Calu3 (cell line): ENCODE measurements at regions of chr17 and their contacts with region 1.

Region 1: GRCh38 chr17:74961657-74962490 is 10.7 kb downstream of the HID1 start:
- DNase-seq: peak; percentile 93
- H3K4me3 Mint-ChIP-seq: no peak overlapping the region
- H3K27ac Mint-ChIP-seq: no peak overlapping the region
- H3K4me1 Mint-ChIP-seq: peaks cover 20% of the 10 kb centered on the region
- H3K27me3 Mint-ChIP-seq: no peaks in the 10 kb centered on the region
- CTCF ChIP-seq: peak; percentile 87

Region 2: GRCh38 chr17:74923533-74924249 is 38.2 kb before region 1 on chr17:
- CTCF ChIA-PET with region 1: interaction called, 11 read pairs
- intact Hi-C with region 1: no loop called
- DNase-seq: peak; percentile 82
- H3K4me3 Mint-ChIP-seq: peak overlapping the region; percentile 61
- H3K27ac Mint-ChIP-seq: no peak overlapping the region
- H3K4me1 Mint-ChIP-seq: no peaks in the 10 kb centered on the region
- H3K27me3 Mint-ChIP-seq: peaks cover 83% of the 10 kb centered on the region
- CTCF ChIP-seq: peak; percentile 95

Region 3: GRCh38 chr17:74972107-74972972 is 10.5 kb after region 1 on chr17 and contains the start of gene HID1:
- CTCF ChIA-PET with region 1: interaction called, 26 read pairs
- intact Hi-C with region 1: no loop called
- DNase-seq: peak; percentile 86
- H3K4me3 Mint-ChIP-seq: peak within 1 kb of the TSS; percentile 72
- H3K27ac Mint-ChIP-seq: peak within 1 kb of the TSS; percentile 76
- H3K4me1 Mint-ChIP-seq: peaks cover 38% of the 10 kb centered on the region
- H3K27me3 Mint-ChIP-seq: no peaks in the 10 kb centered on the region
- CTCF ChIP-seq: no peak
- total RNA-seq, gene HID1: 114 and 122 TPM in 2 replicates

Region 4: GRCh38 chr17:74987418-74987908 is 25.6 kb after region 1 on chr17 and contains the start of gene CDR2L:
- CTCF ChIA-PET with region 1: interaction called, 10 read pairs
- intact Hi-C with region 1: no loop called
- DNase-seq: peak; percentile 98
- H3K4me3 Mint-ChIP-seq: peak within 1 kb of the TSS; percentile 93
- H3K27ac Mint-ChIP-seq: peak within 1 kb of the TSS; percentile 58
- H3K4me1 Mint-ChIP-seq: peaks cover 56% of the 10 kb centered on the region
- H3K27me3 Mint-ChIP-seq: no peaks in the 10 kb centered on the region
- CTCF ChIP-seq: no peak
- total RNA-seq, gene CDR2L: 39.4 and 48.3 TPM in 2 replicates

Region 5: GRCh38 chr17:75012346-75013091 is 50.6 kb after region 1 on chr17 and contains the start of gene MRPL58:
- CTCF ChIA-PET with region 1: interaction called, 38 read pairs
- intact Hi-C with region 1: loop called (anchors 5 kb)
- DNase-seq: peak; percentile 91
- H3K4me3 Mint-ChIP-seq: peak within 1 kb of the TSS; percentile 97
- H3K27ac Mint-ChIP-seq: peak within 1 kb of the TSS; percentile 74
- H3K4me1 Mint-ChIP-seq: peaks cover 40% of the 10 kb centered on the region
- H3K27me3 Mint-ChIP-seq: no peaks in the 10 kb centered on the region
- CTCF ChIP-seq: peak; percentile 64
- total RNA-seq, gene MRPL58: 49.0 and 52.7 TPM in 2 replicates

Region 6: GRCh38 chr17:75034236-75034908 is 72.5 kb after region 1 on chr17:
- CTCF ChIA-PET with region 1: interaction called, 31 read pairs
- intact Hi-C with region 1: loop called (anchors 5 kb)
- DNase-seq: peak; percentile 95
- H3K4me3 Mint-ChIP-seq: peak overlapping the region; percentile 97
- H3K27ac Mint-ChIP-seq: peak overlapping the region; percentile 100
- H3K4me1 Mint-ChIP-seq: peaks cover 30% of the 10 kb centered on the region
- H3K27me3 Mint-ChIP-seq: peaks cover 16% of the 10 kb centered on the region
- CTCF ChIP-seq: no peak